ENCODE measurements at regions of chr9 and their contacts with region 1.

Region 1: GRCh38 chr9:36166101-36166927 is 2.9 kb upstream of the CCIN start:
- DNase-seq: peak; percentile 69 to 98 (median 86)

Region 2: DNA sequence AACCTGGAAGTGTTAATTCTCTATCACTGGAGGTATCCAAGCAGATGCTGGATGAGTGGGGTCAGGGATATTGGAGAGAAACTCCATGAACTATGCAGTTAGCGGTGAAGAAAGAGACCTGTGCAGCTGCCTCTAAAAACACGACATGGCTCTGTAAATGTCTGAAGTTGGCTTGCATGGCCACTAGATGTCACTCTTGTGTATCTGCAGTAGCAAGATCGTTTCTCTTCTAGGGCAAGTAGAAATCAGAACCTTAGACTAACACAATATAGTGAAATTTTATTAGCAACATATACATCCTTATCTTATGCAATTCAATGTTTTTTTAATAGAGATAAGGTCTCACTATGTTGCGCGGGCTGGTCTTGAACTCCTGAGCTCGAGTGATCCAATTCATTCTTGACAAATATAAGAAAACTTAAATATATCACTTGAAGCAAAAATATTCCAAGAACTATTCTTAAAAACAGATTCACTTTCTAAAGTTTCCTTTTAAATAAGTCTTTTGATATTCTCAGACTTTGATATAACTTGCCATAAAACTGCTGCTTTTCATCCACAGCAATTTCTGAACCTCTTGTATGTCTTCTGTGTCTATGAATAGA is 211.3 kb before region 1 on chr9:
- intact Hi-C with region 1: loop called (anchors 5 kb)
- DNase-seq: peak in 4 of 10 donors; percentile 26 to 55 (median 47)

Region 3: DNA sequence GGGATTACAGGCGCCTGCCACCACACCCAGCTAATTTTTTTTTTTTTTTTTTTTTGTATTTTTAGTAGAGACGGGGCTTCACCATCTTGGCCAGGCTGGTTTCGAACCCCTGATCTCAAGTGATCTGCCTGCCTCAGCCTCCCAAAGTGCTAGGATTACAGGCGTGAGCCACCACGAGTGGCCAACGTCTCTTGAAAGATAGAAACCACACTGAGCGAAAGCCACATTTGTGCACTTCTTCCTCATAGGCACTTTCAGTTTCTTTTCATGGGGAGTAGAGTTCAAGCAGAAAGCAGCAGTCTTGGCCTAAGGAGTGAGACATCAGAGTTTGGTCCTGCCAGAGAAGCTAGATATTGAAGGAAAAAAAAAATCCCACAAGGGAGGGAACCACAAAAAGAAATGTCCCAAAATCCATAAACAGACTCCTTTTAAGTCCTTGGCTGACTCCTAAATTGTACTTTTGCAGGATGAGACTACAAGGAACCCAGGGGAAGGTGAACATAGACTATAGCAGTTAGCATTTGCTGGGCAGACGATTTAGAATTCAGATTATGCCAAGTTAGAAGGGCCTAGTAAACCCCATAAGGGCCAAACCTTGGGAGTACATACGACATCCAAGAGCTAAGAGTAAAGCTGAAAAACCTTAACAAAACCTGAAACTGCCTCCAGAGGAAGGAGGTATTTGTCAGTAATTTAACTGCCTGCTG is 73.7 kb before region 1 on chr9:
- intact Hi-C with region 1: no loop called
- DNase-seq: no peak

Region 4: GRCh38 chr9:36102742-36103495 is 63.4 kb before region 1 on chr9:
- intact Hi-C with region 1: loop called (anchors 1 kb)
- DNase-seq: peak; percentile 59 to 95 (median 82)